SK-N-SH (cell line): ENCODE measurements at regions of chr20 and their contacts with region 1.

Region 1: GRCh38 chr20:49484180-49485140 is 2.0 kb upstream of the KCNB1 start:
- DNase-seq: peak; percentile 94
- H3K4me3 ChIP-seq: peak overlapping the region; percentile 65 to 72
- H3K27ac ChIP-seq: no peak overlapping the region; a peak in 1 of 4 replicates
- H3K4me1 ChIP-seq: peaks cover 0 to 13% of the 10 kb centered on the region in 2 experiments; a peak in 1 of 4 replicates
- H3K27me3 ChIP-seq: peaks cover 33% of the 10 kb centered on the region; the same call in 1 of the 2 replicates
- CTCF ChIP-seq: peak; percentile 75
- EP300 ChIP-seq: no peak; a peak in 1 of 4 replicates
- RAD21 ChIP-seq: peak; percentile 78

Region 2: GRCh38 chr20:49344975-49345374 is 139.5 kb before region 1 on chr20:
- CTCF ChIA-PET with region 1: interaction called, 49 read pairs
- POLR2A ChIA-PET with region 1: no interaction called
- DNase-seq: peak; percentile 39
- H3K4me3 ChIP-seq: peak overlapping the region; percentile 3 to 31; a peak in 2 of 4 replicates
- H3K27ac ChIP-seq: peak overlapping the region; percentile 73 to 95; a peak in 3 of 4 replicates
- H3K4me1 ChIP-seq: peaks cover 7 to 20% of the 10 kb centered on the region in 2 experiments; a peak in 3 of 4 replicates
- H3K27me3 ChIP-seq: no peaks in the 10 kb centered on the region
- CTCF ChIP-seq: no peak
- EP300 ChIP-seq: peak in 1 of 2 experiments; percentile 91; a peak in 1 of 4 replicates
- RAD21 ChIP-seq: no peak

Region 3: DNA sequence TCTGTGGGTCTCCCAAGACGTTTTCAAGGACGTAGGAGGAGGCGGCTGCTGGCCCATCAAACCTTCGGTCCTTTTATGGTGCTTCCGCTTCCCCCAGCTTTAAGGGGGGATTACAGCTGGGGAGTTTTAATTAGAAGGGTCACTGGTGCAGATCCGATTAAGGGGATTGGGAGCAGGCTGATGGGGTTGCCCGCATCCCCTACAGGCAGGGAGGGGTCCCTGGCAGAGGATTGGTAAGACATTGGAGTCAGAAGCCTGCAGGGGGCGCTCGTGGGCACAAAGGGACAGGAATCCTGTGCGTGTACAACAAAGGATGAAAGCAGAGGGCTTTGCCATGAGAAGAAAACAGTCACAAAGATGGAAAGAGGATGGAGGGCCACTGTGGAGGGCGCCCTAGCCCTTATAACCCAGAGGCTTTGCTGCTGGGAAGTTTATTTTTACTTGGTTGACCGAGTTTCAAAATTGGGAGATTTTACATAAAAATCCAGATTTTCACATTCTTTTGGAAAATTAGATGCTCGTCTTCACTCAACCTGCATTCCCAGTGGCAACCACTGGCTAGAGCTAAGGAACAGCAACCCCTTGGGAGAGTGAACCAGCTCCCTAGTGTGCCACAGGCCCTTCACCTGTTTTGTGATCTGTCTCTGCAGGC is 99.9 kb before region 1 on chr20:
- CTCF ChIA-PET with region 1: interaction called, 141 read pairs
- POLR2A ChIA-PET with region 1: interaction called, 7 read pairs
- DNase-seq: peak; percentile 64
- H3K4me3 ChIP-seq: no peak overlapping the region; a peak in 1 of 4 replicates
- H3K27ac ChIP-seq: peak overlapping the region in 1 of 2 experiments; percentile 39; a peak in 1 of 4 replicates
- H3K4me1 ChIP-seq: peaks cover 0 to 63% of the 10 kb centered on the region in 2 experiments; a peak in 2 of 4 replicates
- H3K27me3 ChIP-seq: no peaks in the 10 kb centered on the region
- CTCF ChIP-seq: peak; percentile 83
- EP300 ChIP-seq: no peak
- RAD21 ChIP-seq: peak; percentile 62

Region 4: GRCh38 chr20:49411221-49411925 is 73.1 kb before region 1 on chr20:
- CTCF ChIA-PET with region 1: interaction called, 11 read pairs
- POLR2A ChIA-PET with region 1: no interaction called
- DNase-seq: no peak
- H3K4me3 ChIP-seq: no peak overlapping the region
- H3K27ac ChIP-seq: no peak overlapping the region
- H3K4me1 ChIP-seq: peaks cover 0 to 23% of the 10 kb centered on the region in 2 experiments; a peak in 1 of 4 replicates
- H3K27me3 ChIP-seq: peaks cover 5% of the 10 kb centered on the region; the same call in 1 of the 2 replicates
- CTCF ChIP-seq: no peak
- EP300 ChIP-seq: no peak
- RAD21 ChIP-seq: no peak

Region 5: GRCh38 chr20:49446808-49447207 is 37.7 kb before region 1 on chr20:
- CTCF ChIA-PET with region 1: interaction called, 11 read pairs
- POLR2A ChIA-PET with region 1: no interaction called
- DNase-seq: no peak
- H3K4me3 ChIP-seq: no peak overlapping the region
- H3K27ac ChIP-seq: no peak overlapping the region
- H3K4me1 ChIP-seq: peaks cover 0 to 37% of the 10 kb centered on the region in 2 experiments; a peak in 2 of 4 replicates
- H3K27me3 ChIP-seq: no peaks in the 10 kb centered on the region
- CTCF ChIP-seq: no peak
- EP300 ChIP-seq: no peak
- RAD21 ChIP-seq: no peak

Region 6: DNA sequence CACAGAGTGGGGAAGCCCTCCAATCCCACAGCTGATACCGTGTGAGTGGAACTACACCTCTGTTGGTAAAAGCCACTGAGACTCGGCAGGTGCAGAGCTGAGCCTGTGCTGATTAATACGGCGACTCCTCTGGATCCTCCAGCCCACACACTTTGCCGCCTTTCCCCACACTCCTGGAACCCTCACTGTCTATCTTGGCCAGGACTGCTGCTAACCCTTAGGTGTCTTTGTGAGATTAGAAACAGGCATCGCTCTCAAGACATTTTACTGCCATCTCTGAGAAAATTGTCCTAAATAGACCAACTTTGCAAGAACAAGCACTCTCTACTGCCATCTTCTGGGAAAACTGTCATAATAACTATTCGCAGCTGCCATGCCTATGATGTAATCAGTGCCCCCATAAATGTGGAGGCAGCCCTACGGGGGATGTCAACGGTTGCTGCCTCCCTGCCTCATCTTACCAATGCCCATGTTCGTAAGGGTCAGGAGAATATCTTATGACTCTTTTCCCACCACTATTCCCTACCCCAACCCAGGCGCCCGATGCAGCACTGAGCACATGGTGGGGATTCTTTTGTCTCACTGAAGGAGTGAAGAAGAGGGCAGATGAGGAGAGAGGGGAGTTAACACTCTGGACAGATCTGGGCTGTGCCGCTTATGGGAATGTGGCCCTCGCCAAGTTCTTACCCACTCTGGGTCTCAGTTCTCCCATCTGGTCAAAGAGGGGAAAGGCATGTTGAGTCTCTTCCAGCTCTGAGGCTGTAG is 24.2 kb after region 1 on chr20:
- CTCF ChIA-PET with region 1: interaction called, 115 read pairs
- POLR2A ChIA-PET with region 1: no interaction called
- DNase-seq: peak; percentile 74
- H3K4me3 ChIP-seq: no peak overlapping the region
- H3K27ac ChIP-seq: no peak overlapping the region
- H3K4me1 ChIP-seq: peaks cover 10 to 15% of the 10 kb centered on the region in 2 experiments; a peak in 2 of 4 replicates
- H3K27me3 ChIP-seq: no peaks in the 10 kb centered on the region
- CTCF ChIP-seq: peak; percentile 69
- EP300 ChIP-seq: no peak
- RAD21 ChIP-seq: peak; percentile 74

Region 7: GRCh38 chr20:49534255-49534712 is 49.8 kb after region 1 on chr20:
- CTCF ChIA-PET with region 1: interaction called, 24 read pairs
- POLR2A ChIA-PET with region 1: no interaction called
- DNase-seq: peak; percentile 79
- H3K4me3 ChIP-seq: no peak overlapping the region
- H3K27ac ChIP-seq: no peak overlapping the region
- H3K4me1 ChIP-seq: peaks cover 0 to 5% of the 10 kb centered on the region in 2 experiments; a peak in 1 of 4 replicates
- H3K27me3 ChIP-seq: no peaks in the 10 kb centered on the region
- CTCF ChIP-seq: peak; percentile 80
- EP300 ChIP-seq: no peak; a peak in 1 of 4 replicates
- RAD21 ChIP-seq: peak; percentile 85

Region 8: DNA sequence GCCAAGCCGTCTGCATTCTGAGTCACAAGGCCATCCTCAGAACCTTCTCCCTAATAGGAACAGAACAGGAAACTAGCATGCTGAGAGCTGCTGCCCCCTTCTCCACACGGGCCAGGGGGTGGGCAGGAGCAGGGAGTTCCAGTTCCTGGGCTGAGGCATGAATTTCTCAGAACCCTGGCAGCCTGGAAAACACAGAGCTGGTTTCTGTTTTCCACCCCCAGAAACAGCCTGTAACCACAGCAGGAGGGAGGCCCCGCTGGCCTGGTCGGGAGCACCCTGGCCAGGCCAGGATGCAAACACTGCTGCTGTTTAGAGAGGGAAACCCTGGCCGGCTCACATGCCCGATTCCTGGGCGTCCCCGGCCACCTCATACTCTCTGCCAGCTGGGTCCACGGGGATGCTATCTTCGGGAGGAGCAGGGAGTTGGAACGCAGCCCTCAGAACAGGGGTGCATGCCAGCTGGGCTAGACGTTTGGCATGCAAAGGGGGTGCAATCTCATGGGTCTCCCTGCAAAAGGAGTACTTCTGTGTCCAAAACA is 1927.9 kb after region 1 on chr20:
- CTCF ChIA-PET with region 1: no interaction called
- POLR2A ChIA-PET with region 1: no interaction called
- DNase-seq: peak; percentile 74
- H3K4me3 ChIP-seq: no peak overlapping the region
- H3K27ac ChIP-seq: peak overlapping the region; percentile 72 to 93
- H3K4me1 ChIP-seq: peaks cover 9 to 17% of the 10 kb centered on the region in 2 experiments; a peak in 2 of 4 replicates
- H3K27me3 ChIP-seq: no peaks in the 10 kb centered on the region
- CTCF ChIP-seq: no peak
- EP300 ChIP-seq: no peak
- RAD21 ChIP-seq: no peak